SK-N-SH (cell line): ENCODE measurements at regions of chr6 and their contacts with region 1.

Region 1: DNA sequence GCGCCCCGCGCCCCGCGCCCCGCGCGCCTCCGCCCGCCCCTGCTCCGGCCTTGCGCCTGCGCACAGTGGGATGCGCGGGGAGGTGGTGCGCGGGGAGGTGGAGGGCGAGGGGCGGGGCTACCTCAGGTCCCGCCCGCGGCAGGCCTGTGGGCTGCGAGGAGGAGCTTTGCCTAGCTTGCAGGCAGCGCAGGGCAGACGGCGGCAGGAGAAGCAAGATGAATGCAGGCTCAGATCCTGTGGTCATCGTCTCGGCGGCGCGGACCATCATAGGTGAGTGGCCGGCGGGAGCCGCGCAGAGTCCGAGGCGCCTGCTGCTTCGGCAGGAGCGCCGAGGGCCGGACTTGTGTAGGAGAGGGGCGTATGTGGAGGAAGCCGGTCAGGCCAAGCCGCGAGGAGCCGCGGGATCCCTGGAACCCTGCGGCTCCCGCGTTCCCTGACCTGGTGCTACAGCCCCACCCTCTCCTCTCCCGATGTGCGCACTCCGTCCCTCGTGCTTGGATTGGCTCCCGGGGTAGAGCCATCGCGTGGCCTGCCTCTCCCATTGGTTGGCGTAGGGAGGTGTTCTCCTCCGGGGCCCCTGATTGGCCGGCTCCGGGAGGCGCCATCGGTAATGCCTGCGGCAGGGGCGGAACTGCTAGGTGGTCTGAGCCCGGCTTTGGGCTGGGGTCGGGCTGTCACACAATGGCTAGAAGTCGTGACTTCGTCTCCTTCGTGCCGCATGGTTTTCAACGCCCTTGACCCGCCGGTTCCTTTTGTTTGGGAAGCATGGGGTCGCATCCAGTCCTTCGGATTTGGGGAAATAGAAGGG is at the start of gene ACAT2:
- DNase-seq: peak; percentile 99
- H3K4me3 ChIP-seq: peak within 1 kb of the TSS; percentile 75 to 85
- H3K27ac ChIP-seq: peak within 1 kb of the TSS; percentile 94 to 97
- H3K4me1 ChIP-seq: peaks cover 13 to 20% of the 10 kb centered on the region in 2 experiments
- H3K27me3 ChIP-seq: no peaks in the 10 kb centered on the region
- CTCF ChIP-seq: no peak
- EP300 ChIP-seq: no peak
- RAD21 ChIP-seq: no peak
- polyA plus RNA-seq, gene ACAT2: 13.1 and 14.5 TPM in 2 replicates

Region 2: DNA sequence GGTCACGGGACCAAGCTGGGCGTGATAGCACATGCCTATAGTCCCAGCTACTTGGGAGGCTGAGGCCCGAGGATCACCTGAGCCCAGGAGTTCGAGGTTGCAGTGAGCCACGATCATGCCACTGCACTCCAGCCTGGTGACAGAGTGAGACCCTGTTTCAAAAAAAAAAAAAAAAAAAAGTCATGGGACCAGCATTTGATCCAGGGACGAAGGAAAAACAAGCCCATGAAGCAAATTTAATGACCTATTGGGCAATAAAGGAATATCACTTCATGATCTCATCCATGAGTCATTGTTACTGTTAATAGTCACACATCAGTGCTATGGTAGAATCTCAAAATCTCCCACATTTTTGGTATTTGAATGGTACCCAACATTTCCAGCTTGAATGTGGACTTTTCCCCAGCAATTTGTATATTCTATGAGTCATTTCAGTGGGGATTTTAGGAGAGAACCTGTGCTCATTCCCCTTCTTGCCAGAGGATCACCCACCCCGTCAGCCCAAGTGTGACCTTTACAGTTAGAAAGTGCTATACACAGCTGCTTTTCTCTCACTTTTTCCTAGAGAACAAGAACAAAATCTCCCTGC is 60.6 kb before region 1 on chr6:
- CTCF ChIA-PET with region 1: no interaction called
- POLR2A ChIA-PET with region 1: no interaction called
- DNase-seq: no peak
- H3K4me3 ChIP-seq: no peak overlapping the region
- H3K27ac ChIP-seq: peak overlapping the region in 1 of 2 experiments; percentile 72; a peak in 2 of 4 replicates
- H3K4me1 ChIP-seq: peaks cover 0 to 12% of the 10 kb centered on the region in 2 experiments; a peak in 2 of 4 replicates
- H3K27me3 ChIP-seq: no peaks in the 10 kb centered on the region
- CTCF ChIP-seq: no peak
- EP300 ChIP-seq: peak in 1 of 2 experiments; percentile 10; a peak in 1 of 4 replicates
- RAD21 ChIP-seq: no peak

Region 3: DNA sequence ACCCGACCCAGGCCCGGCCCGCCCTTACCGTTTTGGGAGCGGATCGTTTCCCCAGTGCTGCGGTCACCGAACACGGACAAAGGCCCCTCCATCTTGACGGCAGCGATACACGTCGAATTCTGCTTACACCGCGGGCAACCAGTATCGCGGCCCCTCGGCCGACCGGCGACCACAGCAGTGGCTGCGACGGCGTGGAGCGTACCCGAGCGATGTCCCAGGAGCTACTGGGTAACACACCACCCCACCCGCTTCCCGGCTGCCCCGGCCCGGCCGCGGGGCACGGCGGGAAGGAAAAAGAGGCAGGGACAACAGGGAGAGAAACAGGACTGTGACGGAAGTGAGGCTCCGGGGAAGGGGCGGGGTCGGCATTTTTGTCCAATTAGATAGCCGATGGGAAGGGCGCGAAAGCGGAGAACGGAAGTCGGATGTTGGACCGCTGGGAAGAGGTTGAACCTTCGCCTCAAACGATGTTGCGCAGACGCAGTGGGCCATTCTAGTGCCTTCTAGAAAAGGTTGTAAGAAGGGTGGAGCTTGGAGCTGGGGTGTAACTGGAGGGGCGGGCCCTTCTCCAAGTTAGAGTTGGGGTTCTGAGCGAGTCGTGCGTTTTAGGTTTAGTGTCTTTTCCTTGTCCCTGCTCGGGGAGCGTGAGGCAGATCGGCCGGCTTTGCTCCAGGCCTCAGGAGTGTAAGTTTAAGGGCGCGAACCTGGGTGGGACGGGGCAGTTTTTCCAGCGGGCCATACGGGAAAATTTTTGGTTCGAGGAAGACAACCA is 27.5 kb after region 1 on chr6 and contains the start of gene TCP1:
- CTCF ChIA-PET with region 1: interaction called, 3 read pairs
- POLR2A ChIA-PET with region 1: interaction called, 11 read pairs
- DNase-seq: peak; percentile 97
- H3K4me3 ChIP-seq: peak within 1 kb of the TSS; percentile 73 to 90
- H3K27ac ChIP-seq: peak within 1 kb of the TSS; percentile 80 to 94
- H3K4me1 ChIP-seq: peaks cover 10 to 22% of the 10 kb centered on the region in 2 experiments; a peak in 3 of 4 replicates
- H3K27me3 ChIP-seq: no peaks in the 10 kb centered on the region
- CTCF ChIP-seq: no peak
- EP300 ChIP-seq: peak; percentile 12 to 91; a peak in 2 of 4 replicates
- RAD21 ChIP-seq: no peak
- polyA plus RNA-seq, gene TCP1: 138 and 154 TPM in 2 replicates